A673 (cell line): ENCODE measurements at regions of chr7 and their contacts with region 1.

Region 1: GRCh38 chr7:123727071-123727837 is 21.5 kb downstream of the WASL start:
- DNase-seq: no peak
- H3K4me3 ChIP-seq: no peak overlapping the region
- H3K27ac ChIP-seq: no peak overlapping the region
- H3K4me1 ChIP-seq: peaks cover 32% of the 10 kb centered on the region
- H3K27me3 ChIP-seq: no peaks in the 10 kb centered on the region
- CTCF ChIP-seq: no peak

Region 2: DNA sequence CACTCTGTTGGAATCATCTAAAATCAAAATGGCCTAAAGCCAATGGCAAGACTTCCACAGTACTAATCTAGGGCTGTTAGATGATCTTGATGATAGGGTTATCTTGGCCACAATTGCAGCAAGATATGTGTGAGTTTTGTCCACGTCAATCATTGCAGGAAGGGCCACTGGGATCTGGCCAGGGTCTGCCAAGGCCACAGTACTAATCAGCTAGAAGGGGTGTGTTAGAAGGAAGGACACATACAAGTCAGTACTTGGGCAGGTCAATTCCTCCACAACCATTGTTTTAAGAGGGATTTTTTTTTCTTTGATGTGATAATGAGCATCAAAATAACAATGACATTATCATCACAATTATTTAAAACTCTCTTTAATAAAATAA is 70.0 kb before region 1 on chr7:
- CTCF ChIA-PET with region 1: no interaction called
- POLR2A ChIA-PET with region 1: interaction called, 12 read pairs
- intact Hi-C with region 1: no loop called
- DNase-seq: no peak
- H3K4me3 ChIP-seq: no peak overlapping the region
- H3K27ac ChIP-seq: no peak overlapping the region
- H3K4me1 ChIP-seq: no peaks in the 10 kb centered on the region
- H3K27me3 ChIP-seq: no peaks in the 10 kb centered on the region
- CTCF ChIP-seq: no peak